Heart left ventricle (tissue), 16 donors: ENCODE measurements at regions of chr5 and their contacts with region 1.

Region 1: DNA sequence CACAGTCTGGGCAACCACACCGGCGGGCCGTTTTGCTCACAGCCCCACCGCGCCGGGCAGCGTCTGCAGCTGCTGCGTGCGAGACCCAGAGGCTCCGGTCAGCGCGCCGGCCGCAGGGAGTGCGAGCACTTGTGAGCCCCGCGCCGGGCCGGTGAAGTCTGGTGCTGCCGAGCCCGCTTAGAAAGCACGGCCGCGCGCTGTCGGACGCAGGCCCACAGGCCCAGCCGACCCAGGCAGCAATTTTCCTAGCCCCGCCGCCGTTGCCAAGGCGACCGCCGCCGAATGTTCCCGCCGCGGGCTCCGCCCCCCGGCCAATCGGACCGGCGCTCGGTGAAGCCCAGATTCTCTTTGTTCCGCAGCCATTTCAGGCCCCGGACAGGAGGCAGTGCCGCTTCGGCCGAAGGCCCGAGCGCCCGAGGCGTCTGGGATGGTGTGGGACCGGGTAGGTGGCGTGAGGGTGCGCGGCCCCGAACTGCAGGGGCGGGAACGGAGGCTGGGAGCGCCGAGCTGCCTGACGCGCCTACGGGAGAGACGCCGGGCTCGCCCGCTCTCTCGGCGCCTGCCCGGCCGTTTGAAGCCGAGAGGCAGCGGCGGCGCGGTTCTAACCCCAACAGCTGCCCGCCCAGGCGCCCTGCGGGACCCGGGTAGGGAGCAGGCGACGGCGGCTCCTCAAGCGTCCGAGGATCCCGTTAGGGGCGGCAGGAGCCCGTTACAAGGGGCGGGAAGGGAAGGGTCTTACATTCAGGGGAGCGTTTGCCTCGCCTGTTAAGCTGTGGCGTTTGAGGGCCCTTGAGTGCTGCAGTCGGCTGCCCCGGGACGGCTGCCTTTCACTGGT is at the start of gene TNPO1:
- DNase-seq: peak; percentile 94 to 96 (median 95)
- ATAC-seq: peak; percentile 91 to 97 (median 94)
- H3K4me3 ChIP-seq: peak within 1 kb of the TSS; percentile 65 to 91 (median 74)
- H3K27ac ChIP-seq: peak within 1 kb of the TSS; percentile 87 to 99 (median 95)
- H3K4me1 ChIP-seq: peaks cover 0 to 36% (median 16%) of the 10 kb centered on the region in 12 donors
- H3K27me3 ChIP-seq: no peaks in the 10 kb centered on the region
- CTCF ChIP-seq: peak in 1 of 12 donors; percentile 13
- POLR2A ChIP-seq: peak; percentile 85 to 99
- total RNA-seq, gene TNPO1: 56.4 to 92.2 (median 68.4) TPM

Region 2: DNA sequence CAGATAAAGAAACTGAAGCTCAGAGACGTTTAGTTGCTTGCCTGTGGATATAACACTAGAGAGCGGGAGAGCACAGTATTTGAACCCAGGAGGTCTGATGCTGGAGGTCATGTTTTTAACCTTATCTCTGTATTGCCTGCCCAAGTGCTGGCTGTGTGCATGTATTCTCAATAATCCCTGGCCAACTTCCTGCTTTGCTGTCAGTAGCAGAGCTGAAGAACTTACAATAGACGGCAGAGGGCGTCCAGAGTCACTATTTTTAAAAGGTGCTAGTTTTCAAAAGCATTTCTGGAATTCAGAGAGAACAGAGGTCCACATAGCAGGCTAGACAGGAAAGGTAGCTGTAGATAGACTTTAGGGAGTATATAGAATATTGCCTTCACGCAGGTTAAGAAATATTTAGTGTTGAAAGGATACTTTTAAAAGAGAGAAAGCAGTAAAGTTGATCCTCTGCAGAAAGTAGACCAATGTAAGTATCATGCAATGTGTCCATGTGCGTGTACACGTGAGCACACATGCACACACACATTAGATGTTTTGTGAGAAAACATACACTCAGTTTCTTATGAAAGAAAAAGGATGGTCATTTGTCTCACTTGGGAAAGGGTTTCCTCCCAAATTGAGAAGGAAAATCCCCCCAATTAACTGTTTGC is 450.1 kb before region 1 on chr5:
- intact Hi-C with region 1: loop called in 7 of 10 experiments (anchors 2 to 10 kb)
- DNase-seq: peak in 4 of 5 donors; percentile 68 to 78 (median 75)
- ATAC-seq: peak; percentile 78 to 92 (median 91)
- H3K4me3 ChIP-seq: no peak overlapping the region
- H3K27ac ChIP-seq: peak overlapping the region in 6 of 12 donors; percentile 15 to 43 (median 25)
- H3K4me1 ChIP-seq: peaks cover 0 to 44% (median 11%) of the 10 kb centered on the region in 12 donors
- H3K27me3 ChIP-seq: no peaks in the 10 kb centered on the region
- CTCF ChIP-seq: peak; percentile 65 to 89 (median 82)
- POLR2A ChIP-seq: no peak

Region 3: DNA sequence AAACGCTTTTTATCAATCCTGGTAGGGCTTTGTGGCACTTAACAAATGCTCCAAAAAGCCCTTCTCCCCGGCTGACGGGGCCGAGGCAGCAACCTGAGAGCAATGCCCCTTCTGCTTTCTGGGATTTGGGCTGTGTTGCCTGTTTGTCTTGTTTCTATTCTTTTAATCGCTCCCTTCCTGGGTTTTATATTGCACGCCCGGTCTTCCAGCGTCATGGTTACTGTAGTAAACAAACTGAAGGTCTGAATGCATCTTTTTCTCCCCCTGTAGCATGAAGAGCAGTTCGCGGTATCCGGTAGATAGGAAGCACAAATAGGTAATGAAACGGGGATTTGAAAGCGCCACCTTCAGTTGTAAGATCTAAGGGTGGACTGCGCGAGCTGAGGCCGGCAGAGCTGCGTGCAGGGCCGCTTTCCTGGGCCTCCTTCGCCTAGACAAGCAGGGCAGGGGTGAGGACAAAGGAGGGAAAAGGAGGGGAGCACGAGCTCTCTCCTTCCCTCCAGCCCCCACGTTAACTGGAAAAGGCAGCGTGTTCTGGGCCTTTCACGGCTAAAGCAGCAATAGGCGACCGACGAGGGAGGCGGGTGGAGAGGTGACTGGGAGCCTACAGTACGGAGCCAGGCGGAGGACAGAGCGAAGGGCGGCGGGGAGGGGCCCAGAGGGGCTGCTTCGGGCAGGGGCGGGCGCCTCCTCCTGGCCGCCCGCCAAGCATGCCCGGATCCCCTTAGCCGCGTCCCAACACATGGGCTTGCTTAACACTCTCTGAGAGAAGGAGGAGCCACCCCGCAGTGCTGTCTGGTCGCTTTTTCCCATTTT is 260.0 kb before region 1 on chr5:
- intact Hi-C with region 1: loop called in 2 of 10 experiments (anchors 5 to 10 kb)
- DNase-seq: peak; percentile 50 to 77 (median 66)
- ATAC-seq: peak; percentile 45 to 85 (median 81)
- H3K4me3 ChIP-seq: peak overlapping the region in 11 of 12 donors; percentile 19 to 57 (median 45)
- H3K27ac ChIP-seq: peak overlapping the region in 11 of 12 donors; percentile 8 to 77 (median 63)
- H3K4me1 ChIP-seq: peaks cover 0 to 37% (median 18%) of the 10 kb centered on the region in 12 donors
- H3K27me3 ChIP-seq: no peaks in the 10 kb centered on the region
- CTCF ChIP-seq: peak in 5 of 12 donors; percentile 3 to 29 (median 13)
- POLR2A ChIP-seq: no peak

Region 4: GRCh38 chr5:72611118-72611730 is 205.3 kb before region 1 on chr5:
- intact Hi-C with region 1: loop called (anchors 1 to 10 kb)
- DNase-seq: peak; percentile 69 to 83 (median 75)
- ATAC-seq: peak; percentile 89 to 99 (median 97)
- H3K4me3 ChIP-seq: peak overlapping the region in 1 of 12 donors; percentile 13
- H3K27ac ChIP-seq: no peak overlapping the region
- H3K4me1 ChIP-seq: peaks cover 0 to 8% (median 0%) of the 10 kb centered on the region in 12 donors
- H3K27me3 ChIP-seq: no peaks in the 10 kb centered on the region
- CTCF ChIP-seq: peak; percentile 88 to 99 (median 92)
- POLR2A ChIP-seq: no peak

Region 5: DNA sequence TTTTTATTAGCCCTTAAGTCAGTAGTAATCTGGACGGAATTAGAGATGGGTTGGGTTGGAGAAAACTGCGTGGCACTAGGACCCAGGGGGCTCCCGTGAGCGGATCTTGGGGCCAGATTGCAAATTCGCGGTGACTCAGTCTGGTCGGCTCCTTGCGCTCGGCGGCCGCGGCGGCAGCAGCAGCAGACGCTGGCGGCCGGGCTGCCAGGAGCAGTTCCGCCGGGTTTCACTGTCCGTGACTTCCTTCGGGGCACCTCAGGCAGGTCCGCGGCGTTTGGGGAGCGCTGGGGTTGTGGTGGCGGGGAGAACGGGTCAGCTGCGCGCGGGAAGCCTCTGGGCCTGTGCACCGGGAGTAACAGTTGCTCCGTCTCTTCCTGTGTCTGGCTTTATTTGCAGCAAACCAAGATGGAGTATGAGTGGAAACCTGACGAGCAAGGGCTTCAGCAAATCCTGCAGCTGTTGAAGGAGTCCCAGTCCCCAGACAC is 31.5 kb after region 1 on chr5:
- intact Hi-C with region 1: loop called in 3 of 10 experiments (anchors 1 to 2 kb)
- DNase-seq: peak; percentile 88 to 93 (median 91)
- ATAC-seq: peak; percentile 88 to 96 (median 95)
- H3K4me3 ChIP-seq: peak overlapping the region; percentile 66 to 91 (median 79)
- H3K27ac ChIP-seq: peak overlapping the region; percentile 83 to 93 (median 92)
- H3K4me1 ChIP-seq: peaks cover 0 to 87% (median 51%) of the 10 kb centered on the region in 12 donors
- H3K27me3 ChIP-seq: no peaks in the 10 kb centered on the region
- CTCF ChIP-seq: peak in 2 of 12 donors; percentile 23 to 27
- POLR2A ChIP-seq: peak in 1 of 2 donors; percentile 79

Region 6: GRCh38 chr5:72955768-72956323 is 139.3 kb after region 1 on chr5 and contains the start of gene FCHO2:
- intact Hi-C with region 1: loop called in 1 of 10 experiments (anchors 2 kb)
- DNase-seq: peak; percentile 98 to 100 (median 99)
- ATAC-seq: peak; percentile 93 to 97 (median 96)
- H3K4me3 ChIP-seq: peak within 1 kb of the TSS; percentile 67 to 89 (median 83)
- H3K27ac ChIP-seq: peak within 1 kb of the TSS; percentile 90 to 99 (median 96)
- H3K4me1 ChIP-seq: peaks cover 0 to 63% (median 25%) of the 10 kb centered on the region in 12 donors
- H3K27me3 ChIP-seq: no peaks in the 10 kb centered on the region
- CTCF ChIP-seq: peak; percentile 77 to 95 (median 88)
- POLR2A ChIP-seq: peak in 1 of 2 donors; percentile 71
- total RNA-seq, gene FCHO2: 10.9 to 35.3 (median 19.3) TPM